WTC11 (cell line): ENCODE measurements at regions of chr18 and their contacts with region 1.

Region 1: DNA sequence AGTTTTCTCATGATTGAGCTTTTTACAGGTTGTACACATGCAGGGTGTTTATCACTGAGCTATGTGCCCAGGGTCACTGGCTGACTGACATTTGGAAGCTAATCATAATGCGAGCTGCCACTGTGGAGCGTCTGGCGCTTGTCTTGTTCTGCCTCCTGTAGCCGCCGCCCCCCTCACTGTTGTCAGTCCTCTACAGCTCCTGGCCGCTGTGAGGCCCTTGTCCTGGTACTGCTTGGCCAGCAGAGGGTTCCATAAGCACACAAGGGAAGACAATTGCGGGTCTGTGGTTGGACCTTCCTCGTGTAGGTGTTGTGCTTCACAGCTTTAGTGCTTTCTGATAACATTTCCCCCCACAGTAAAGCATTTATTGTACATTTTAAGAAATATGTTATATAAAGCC is 105.6 kb upstream of the LDLRAD4 start:
- DNase-seq: peak; percentile 82
- ATAC-seq: peak; percentile 100
- H3K4me3 Mint-ChIP-seq: no peak overlapping the region
- H3K27ac Mint-ChIP-seq: no peak overlapping the region
- H3K4me1 Mint-ChIP-seq: no peaks in the 10 kb centered on the region; the same call in 1 of the 2 replicates
- H3K27me3 Mint-ChIP-seq: no peaks in the 10 kb centered on the region
- CTCF ChIP-seq: no peak

Region 2: GRCh38 chr18:12628706-12629702 is 484.0 kb before region 1 on chr18:
- CTCF ChIA-PET with region 1: no interaction called
- POLR2A ChIA-PET with region 1: no interaction called
- DNase-seq: no peak
- ATAC-seq: no peak
- H3K4me3 Mint-ChIP-seq: no peak overlapping the region
- H3K27ac Mint-ChIP-seq: no peak overlapping the region
- H3K4me1 Mint-ChIP-seq: peaks cover 5% of the 10 kb centered on the region; the same call in 1 of the 2 replicates
- H3K27me3 Mint-ChIP-seq: no peaks in the 10 kb centered on the region
- CTCF ChIP-seq: no peak

Region 3: DNA sequence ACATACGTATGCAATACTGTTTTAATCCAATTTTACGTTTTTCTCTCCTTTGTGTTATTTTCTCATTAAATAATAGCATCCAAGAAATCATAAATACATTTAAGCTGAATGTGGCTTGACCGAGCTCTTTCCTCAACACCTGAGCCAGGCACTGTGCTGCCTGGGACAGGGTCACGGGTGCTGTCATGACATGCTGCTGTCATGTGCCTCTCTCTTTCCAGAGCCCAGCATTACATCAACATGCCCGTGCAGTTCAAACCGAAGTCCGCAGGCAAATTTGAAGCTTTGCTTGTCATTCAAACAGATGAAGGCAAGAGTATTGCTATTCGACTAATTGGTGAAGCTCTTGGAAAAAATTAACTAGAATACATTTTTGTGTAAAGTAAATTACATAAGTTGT is 11.4 kb after region 1 on chr18:
- CTCF ChIA-PET with region 1: interaction called, 19 read pairs
- POLR2A ChIA-PET with region 1: interaction called, 3 read pairs
- DNase-seq: no peak
- ATAC-seq: no peak
- H3K4me3 Mint-ChIP-seq: no peak overlapping the region
- H3K27ac Mint-ChIP-seq: no peak overlapping the region
- H3K4me1 Mint-ChIP-seq: no peaks in the 10 kb centered on the region
- H3K27me3 Mint-ChIP-seq: no peaks in the 10 kb centered on the region
- CTCF ChIP-seq: no peak

Region 4: GRCh38 chr18:13166023-13166422 is 53.0 kb after region 1 on chr18:
- CTCF ChIA-PET with region 1: interaction called, 12 read pairs
- POLR2A ChIA-PET with region 1: no interaction called
- DNase-seq: no peak
- ATAC-seq: no peak
- H3K4me3 Mint-ChIP-seq: no peak overlapping the region
- H3K27ac Mint-ChIP-seq: no peak overlapping the region
- H3K4me1 Mint-ChIP-seq: peaks cover 25% of the 10 kb centered on the region
- H3K27me3 Mint-ChIP-seq: peaks cover 3% of the 10 kb centered on the region; the same call in 1 of the 2 replicates
- CTCF ChIP-seq: no peak